ENCODE measurements at regions of chr3 and their contacts with region 1.

Region 1: DNA sequence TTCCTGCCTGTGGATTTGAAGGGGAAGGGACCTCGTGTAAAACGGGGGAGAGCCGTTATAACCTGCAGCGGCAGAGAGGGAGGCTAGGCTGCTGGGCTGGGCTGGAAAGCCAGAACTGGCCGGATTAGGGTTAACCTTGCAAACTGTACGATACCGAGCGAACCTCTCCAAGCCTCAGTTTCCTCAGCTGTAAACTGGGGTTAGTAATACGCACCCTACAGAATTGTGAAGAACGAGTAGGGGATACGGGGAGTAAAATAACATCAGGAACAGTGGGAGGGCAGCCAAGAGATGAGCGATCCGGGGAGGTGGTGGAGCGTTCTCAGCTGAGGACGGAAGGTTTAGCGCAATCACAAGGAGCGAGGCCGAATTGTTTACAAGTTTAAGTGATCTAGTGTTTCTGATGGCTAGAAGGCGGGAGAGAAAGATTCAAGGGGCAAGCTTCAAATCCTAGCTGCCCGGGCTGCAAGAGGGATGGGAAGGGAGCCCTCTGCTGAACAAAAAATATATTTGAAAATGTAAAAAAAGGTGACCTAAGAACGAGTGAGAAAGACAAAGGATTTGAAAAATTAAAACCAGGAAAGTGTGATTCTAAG is 768 bp upstream of the SEMA5B start:
- DNase-seq: peak in 4 of 5 donors; percentile 13 to 39 (median 34)
- H3K4me3 ChIP-seq: peak overlapping the region; percentile 61 to 81
- H3K4me3 Mint-ChIP-seq: peak overlapping the region; percentile 76 to 92 (median 84)
- H3K27ac ChIP-seq: no peak overlapping the region
- H3K27ac Mint-ChIP-seq: peak overlapping the region in 2 of 7 donors; percentile 3 to 49
- H3K4me1 ChIP-seq: peaks cover 19% of the 10 kb centered on the region
- H3K4me1 Mint-ChIP-seq: peaks cover 9 to 22% (median 16%) of the 10 kb centered on the region in 4 donors
- H3K27me3 ChIP-seq: peaks cover 53% of the 10 kb centered on the region
- H3K27me3 Mint-ChIP-seq: peaks cover 43 to 54% of the 10 kb centered on the region in 2 donors

Region 2: DNA sequence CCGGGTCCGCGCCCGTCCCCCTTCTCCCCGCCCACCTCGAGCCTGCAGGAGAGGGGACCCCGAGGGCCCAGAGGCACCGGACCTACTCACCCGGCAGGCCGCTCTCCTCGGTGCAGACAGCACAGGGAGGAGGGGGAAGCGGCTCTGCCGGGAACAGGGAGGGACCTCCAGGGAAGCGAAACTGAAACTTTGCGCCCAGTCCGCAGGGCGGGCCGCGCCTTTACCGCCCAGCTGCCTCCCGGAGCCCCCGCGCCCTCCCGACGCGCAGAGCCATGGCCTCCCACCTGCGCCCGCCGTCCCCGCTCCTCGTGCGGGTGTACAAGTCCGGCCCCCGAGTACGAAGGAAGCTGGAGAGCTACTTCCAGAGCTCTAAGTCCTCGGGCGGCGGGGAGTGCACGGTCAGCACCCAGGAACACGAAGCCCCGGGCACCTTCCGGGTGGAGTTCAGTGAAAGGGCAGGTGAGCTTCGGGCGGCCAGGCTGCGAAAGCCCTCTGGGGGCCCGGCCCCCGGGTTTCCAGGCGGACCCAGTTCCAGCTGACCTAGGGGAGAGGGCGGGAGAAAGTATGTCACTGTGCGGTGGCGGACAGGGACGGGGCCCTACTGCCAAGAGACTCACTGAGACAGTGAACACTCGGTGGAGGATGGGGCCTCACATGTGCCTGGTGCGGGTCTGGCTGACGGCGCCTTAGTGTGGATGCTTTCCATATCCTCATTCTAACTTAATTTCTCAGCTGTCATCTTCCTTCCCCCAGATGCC is 464.0 kb before region 1 on chr3 and contains the starts of genes DTX3L and PARP9:
- CTCF ChIA-PET with region 1: interaction called, 6 read pairs
- POLR2A ChIA-PET with region 1: no interaction called
- intact Hi-C with region 1: loop called (anchors 2 kb)
- DNase-seq: peak; percentile 79 to 87 (median 81)
- H3K4me3 ChIP-seq: peak within 1 kb of the TSS; percentile 78 to 94
- H3K4me3 Mint-ChIP-seq: peak within 1 kb of the TSS; percentile 92 to 98 (median 96)
- H3K27ac ChIP-seq: peak within 1 kb of the TSS; percentile 95
- H3K27ac Mint-ChIP-seq: peak within 1 kb of the TSS; percentile 90 to 99 (median 97)
- H3K4me1 ChIP-seq: peaks cover 70% of the 10 kb centered on the region
- H3K4me1 Mint-ChIP-seq: peaks cover 55 to 85% (median 70%) of the 10 kb centered on the region in 4 donors
- H3K27me3 ChIP-seq: no peaks in the 10 kb centered on the region
- H3K27me3 Mint-ChIP-seq: no peaks in the 10 kb centered on the region
- total RNA-seq, gene DTX3L: 49.3 to 51.0 TPM
- total RNA-seq, gene PARP9: 24.0 to 26.0 TPM

Region 3: DNA sequence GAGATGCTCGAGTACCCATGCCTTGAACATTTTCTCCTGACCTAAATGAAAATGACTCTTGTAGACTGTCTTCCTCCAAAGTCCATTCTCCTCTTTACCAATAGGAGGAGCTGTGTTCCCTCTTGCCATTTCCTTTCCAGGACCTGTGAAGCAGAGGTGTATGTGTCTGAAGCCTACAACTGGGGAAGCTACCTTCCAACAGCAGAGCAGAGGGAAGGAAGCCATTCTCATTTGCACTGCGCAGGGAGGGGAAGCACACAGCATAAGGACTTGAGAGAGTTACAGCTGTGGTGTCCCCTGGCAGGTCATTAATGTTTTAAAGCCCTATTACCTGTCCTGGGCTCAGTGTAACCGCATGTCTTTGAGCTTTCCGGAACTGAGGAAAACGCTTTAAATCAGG is 273.4 kb before region 1 on chr3:
- CTCF ChIA-PET with region 1: interaction called, 32 read pairs
- POLR2A ChIA-PET with region 1: interaction called, 3 read pairs
- intact Hi-C with region 1: loop called (anchors 1 kb)
- DNase-seq: peak in 4 of 5 donors; percentile 33 to 52 (median 46)
- H3K4me3 ChIP-seq: no peak overlapping the region
- H3K4me3 Mint-ChIP-seq: no peak overlapping the region
- H3K27ac ChIP-seq: no peak overlapping the region
- H3K27ac Mint-ChIP-seq: peak overlapping the region in 1 of 7 donors; percentile 24
- H3K4me1 ChIP-seq: no peaks in the 10 kb centered on the region
- H3K4me1 Mint-ChIP-seq: peaks cover 0 to 3% (median under 1%) of the 10 kb centered on the region in 4 donors
- H3K27me3 ChIP-seq: no peaks in the 10 kb centered on the region
- H3K27me3 Mint-ChIP-seq: no peaks in the 10 kb centered on the region

Region 4: GRCh38 chr3:122858373-122858772 is 170.0 kb before region 1 on chr3:
- CTCF ChIA-PET with region 1: interaction called, 4 read pairs
- POLR2A ChIA-PET with region 1: no interaction called
- intact Hi-C with region 1: loop called (anchors 2 kb)
- DNase-seq: no peak
- H3K4me3 ChIP-seq: no peak overlapping the region
- H3K4me3 Mint-ChIP-seq: no peak overlapping the region
- H3K27ac ChIP-seq: no peak overlapping the region
- H3K27ac Mint-ChIP-seq: no peak overlapping the region
- H3K4me1 ChIP-seq: no peaks in the 10 kb centered on the region
- H3K4me1 Mint-ChIP-seq: no peaks in the 10 kb centered on the region
- H3K27me3 ChIP-seq: no peaks in the 10 kb centered on the region
- H3K27me3 Mint-ChIP-seq: no peaks in the 10 kb centered on the region

Region 5: GRCh38 chr3:123258811-123259420 is 230.6 kb after region 1 on chr3:
- CTCF ChIA-PET with region 1: no interaction called
- POLR2A ChIA-PET with region 1: no interaction called
- intact Hi-C with region 1: loop called (anchors 1 kb)
- DNase-seq: peak in 4 of 5 donors; percentile 7 to 24 (median 12)
- H3K4me3 ChIP-seq: no peak overlapping the region
- H3K4me3 Mint-ChIP-seq: no peak overlapping the region
- H3K27ac ChIP-seq: no peak overlapping the region
- H3K27ac Mint-ChIP-seq: peak overlapping the region in 3 of 7 donors; percentile 8 to 65 (median 46)
- H3K4me1 ChIP-seq: no peaks in the 10 kb centered on the region
- H3K4me1 Mint-ChIP-seq: peaks cover 0 to 4% (median 2%) of the 10 kb centered on the region in 4 donors
- H3K27me3 ChIP-seq: no peaks in the 10 kb centered on the region
- H3K27me3 Mint-ChIP-seq: no peaks in the 10 kb centered on the region

Region 6: GRCh38 chr3:123382846-123383746 is 354.8 kb after region 1 on chr3:
- CTCF ChIA-PET with region 1: no interaction called
- POLR2A ChIA-PET with region 1: no interaction called
- intact Hi-C with region 1: no loop called
- DNase-seq: no peak
- H3K4me3 ChIP-seq: no peak overlapping the region
- H3K4me3 Mint-ChIP-seq: no peak overlapping the region
- H3K27ac ChIP-seq: no peak overlapping the region
- H3K27ac Mint-ChIP-seq: peak overlapping the region in 1 of 7 donors; percentile 25
- H3K4me1 ChIP-seq: no peaks in the 10 kb centered on the region
- H3K4me1 Mint-ChIP-seq: no peaks in the 10 kb centered on the region
- H3K27me3 ChIP-seq: no peaks in the 10 kb centered on the region
- H3K27me3 Mint-ChIP-seq: peaks cover 5 to 12% of the 10 kb centered on the region in 2 donors

Measured in CD4-positive, alpha-beta memory T cell (primary cell).